WTC11 (cell line): ENCODE measurements at regions of chr12 and their contacts with region 1.

Region 1: DNA sequence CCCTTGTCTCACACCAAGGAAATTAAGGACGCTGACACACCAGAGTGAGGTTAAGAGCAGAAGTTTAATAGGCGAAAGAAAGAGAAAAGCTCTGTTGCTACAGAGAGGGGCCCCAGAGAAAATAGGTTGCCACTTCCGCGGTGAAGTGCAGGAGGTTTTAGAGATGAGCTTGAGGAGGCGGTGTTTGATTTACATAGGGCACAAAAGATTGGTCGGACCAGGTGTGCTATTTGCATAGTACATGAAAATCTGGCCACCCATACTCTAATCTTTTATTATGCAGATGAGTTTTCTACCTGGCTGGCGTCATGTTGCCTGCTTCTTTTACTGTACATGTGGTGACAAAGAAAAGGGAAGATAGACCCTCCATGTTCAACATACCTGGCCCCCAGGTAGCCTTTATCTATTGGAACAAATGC is 23.3 kb upstream of the MYF6 start:
- DNase-seq: peak; percentile 48
- ATAC-seq: peak; percentile 98
- H3K4me3 Mint-ChIP-seq: peak overlapping the region; percentile 57
- H3K27ac Mint-ChIP-seq: peak overlapping the region; percentile 97
- H3K4me1 Mint-ChIP-seq: peaks cover 16% of the 10 kb centered on the region
- H3K27me3 Mint-ChIP-seq: no peaks in the 10 kb centered on the region
- CTCF ChIP-seq: no peak

Region 2: GRCh38 chr12:80580254-80580653 is 103.8 kb before region 1 on chr12:
- CTCF ChIA-PET with region 1: no interaction called
- POLR2A ChIA-PET with region 1: no interaction called
- DNase-seq: no peak
- ATAC-seq: no peak
- H3K4me3 Mint-ChIP-seq: no peak overlapping the region
- H3K27ac Mint-ChIP-seq: no peak overlapping the region
- H3K4me1 Mint-ChIP-seq: no peaks in the 10 kb centered on the region
- H3K27me3 Mint-ChIP-seq: no peaks in the 10 kb centered on the region
- CTCF ChIP-seq: no peak

Region 3: DNA sequence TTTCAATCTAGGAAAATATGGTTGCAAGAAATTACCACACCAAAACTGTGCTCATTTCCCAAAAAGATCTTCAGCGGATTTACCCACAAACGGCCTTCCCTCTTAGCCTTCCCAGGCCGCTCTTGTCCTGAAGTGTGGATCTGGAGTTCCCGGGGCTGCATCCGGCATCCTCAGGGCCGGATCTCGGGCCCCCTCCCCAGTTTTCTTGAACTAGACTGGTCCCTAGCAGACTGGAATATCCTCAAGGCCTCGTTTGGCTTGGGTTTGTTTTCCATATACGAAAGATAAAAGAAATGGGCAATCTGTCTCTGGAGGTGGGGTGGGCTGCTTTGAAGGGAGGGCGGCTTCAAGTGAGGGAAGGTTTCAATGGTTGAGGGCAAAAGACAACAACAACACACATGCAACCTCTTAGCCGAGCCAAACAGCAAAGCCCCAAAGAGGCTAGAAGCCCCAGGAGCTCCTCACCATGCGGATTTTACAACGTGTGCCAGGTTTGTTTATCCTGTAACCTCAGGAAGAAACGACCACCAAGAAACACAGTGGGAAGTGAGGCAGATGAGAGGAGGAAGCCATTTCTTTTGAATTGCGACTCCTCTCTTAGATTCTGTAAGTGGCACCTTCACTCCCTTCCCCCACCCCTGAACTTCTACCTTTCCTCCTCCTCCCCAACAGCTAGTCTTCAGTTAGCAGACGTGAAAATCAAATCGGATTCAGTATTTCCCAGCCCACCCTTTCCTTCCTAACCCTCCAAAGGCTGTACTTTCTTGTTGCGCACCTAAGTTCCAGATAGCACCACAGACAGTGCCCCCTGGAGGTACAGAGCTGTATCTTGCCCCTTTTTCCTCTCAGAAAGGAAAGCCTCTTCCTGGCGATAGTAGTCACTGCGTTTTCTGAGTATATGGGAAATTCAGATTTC is 26.0 kb after region 1 on chr12:
- CTCF ChIA-PET with region 1: interaction called, 10 read pairs
- POLR2A ChIA-PET with region 1: no interaction called
- DNase-seq: peak; percentile 62
- ATAC-seq: peak; percentile 40
- H3K4me3 Mint-ChIP-seq: peak overlapping the region; percentile 65
- H3K27ac Mint-ChIP-seq: no peak overlapping the region
- H3K4me1 Mint-ChIP-seq: peaks cover 65% of the 10 kb centered on the region
- H3K27me3 Mint-ChIP-seq: peaks cover 99% of the 10 kb centered on the region
- CTCF ChIP-seq: peak; percentile 58